AG04449 (cell line): ENCODE measurements at regions of chr3 and their contacts with region 1.

Region 1: GRCh38 chr3:186783073-186783730 is at the start of gene EIF4A2:
- DNase-seq: peak; percentile 52
- H3K4me3 ChIP-seq: peak within 1 kb of the TSS; percentile 98
- CTCF ChIP-seq: no peak

Region 2: GRCh38 chr3:186570096-186570940 is 212.9 kb before region 1 on chr3 and contains the start of gene DNAJB11:
- CTCF ChIA-PET with region 1: no interaction called
- POLR2A ChIA-PET with region 1: interaction called, 11 read pairs
- DNase-seq: peak; percentile 99
- H3K4me3 ChIP-seq: peak within 1 kb of the TSS; percentile 93
- CTCF ChIP-seq: no peak

Region 3: GRCh38 chr3:186772701-186773424 is 10.3 kb before region 1 on chr3:
- CTCF ChIA-PET with region 1: interaction called, 6 read pairs
- POLR2A ChIA-PET with region 1: interaction called, 73 read pairs
- DNase-seq: no peak
- H3K4me3 ChIP-seq: peak overlapping the region; percentile 44
- CTCF ChIP-seq: no peak

Region 4: DNA sequence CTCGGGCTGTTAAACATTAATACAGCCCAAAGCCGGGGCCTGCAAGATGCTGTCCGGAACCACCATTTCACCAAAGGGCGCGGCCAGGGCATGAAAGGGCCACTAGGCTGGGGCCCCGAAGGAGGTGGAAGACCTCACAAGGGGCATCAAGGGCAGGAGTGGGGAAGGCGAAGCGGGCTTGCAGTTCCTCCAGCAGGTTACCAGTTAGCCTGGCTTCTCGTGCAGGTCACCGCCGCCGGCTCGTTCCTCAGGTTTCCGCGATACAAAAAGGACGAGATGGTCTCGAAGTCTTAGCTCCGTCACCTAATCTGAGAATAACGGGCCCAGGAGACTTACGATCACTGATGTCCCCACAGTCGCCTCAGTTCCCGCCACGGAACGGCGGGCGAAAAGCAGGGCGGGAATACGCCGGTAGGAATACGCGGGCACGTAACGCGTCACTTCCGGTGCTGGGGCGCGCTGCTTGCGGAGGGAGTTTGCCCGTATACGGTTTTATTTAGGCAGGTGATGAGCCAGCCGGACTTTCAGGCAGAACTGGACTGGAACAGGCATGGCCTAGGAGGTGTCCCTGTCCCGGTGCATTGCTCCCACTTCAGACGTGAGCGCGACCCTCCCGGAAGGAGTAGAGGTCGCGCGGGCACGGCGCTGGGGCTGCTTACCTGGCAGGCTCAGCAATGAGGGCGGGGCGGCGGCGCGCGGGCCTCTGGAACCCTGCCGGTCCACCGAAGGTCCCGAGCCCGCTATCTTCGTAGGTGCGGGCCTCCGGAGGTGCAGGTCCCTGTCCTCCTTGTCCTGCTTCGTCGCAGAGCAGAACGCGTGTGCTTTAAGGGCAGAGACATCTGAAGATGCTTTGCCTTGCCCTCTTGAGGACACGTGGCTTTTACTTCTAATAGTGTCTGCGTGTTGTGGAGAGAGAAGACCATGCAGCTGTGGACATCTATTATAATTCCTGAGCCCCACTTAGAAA is 23.2 kb after region 1 on chr3 and contains the start of gene RFC4:
- CTCF ChIA-PET with region 1: no interaction called
- POLR2A ChIA-PET with region 1: interaction called, 13 read pairs
- DNase-seq: no peak
- H3K4me3 ChIP-seq: peak within 1 kb of the TSS; percentile 89
- CTCF ChIP-seq: no peak

Region 5: DNA sequence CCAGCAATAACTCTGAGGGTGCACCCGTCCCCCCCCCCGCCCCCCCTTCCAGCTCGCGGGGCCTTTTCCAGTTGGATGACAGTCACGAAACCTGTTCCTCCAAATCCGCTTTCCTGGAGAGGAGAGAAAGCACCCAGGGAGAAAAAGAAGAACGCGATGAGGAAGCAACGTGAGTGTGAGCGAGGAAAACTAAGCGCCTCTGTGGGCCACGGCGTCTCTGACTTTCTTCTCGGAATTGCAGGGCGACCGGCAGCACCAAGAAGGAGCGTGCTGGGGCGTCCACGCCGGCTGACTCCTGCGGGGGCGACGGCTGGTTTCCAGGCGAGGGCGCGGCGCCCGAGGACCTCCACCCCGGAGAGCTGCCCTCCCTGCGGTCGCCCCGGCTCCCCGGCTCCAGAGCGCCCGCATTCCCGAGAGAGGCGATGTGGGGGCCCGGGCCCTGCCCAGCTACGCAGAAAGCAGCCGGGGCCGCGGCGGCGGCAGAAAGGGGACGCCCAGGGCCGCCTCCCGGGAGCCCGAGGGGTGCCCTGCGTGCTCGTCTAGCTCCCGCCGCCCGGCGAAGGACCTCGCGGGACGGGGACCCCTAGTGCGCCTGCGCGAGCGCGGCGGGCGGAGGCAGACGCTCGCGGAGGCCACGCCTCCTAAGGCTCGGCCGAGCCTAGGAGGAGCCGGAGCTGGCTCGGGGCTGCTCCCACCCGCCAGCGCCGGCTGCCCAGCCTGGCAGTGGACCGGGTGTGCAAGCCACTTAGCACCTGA is 44.0 kb after region 1 on chr3:
- CTCF ChIA-PET with region 1: interaction called, 6 read pairs
- POLR2A ChIA-PET with region 1: interaction called, 20 read pairs
- DNase-seq: no peak
- H3K4me3 ChIP-seq: peak overlapping the region; percentile 64
- CTCF ChIP-seq: no peak

Region 6: DNA sequence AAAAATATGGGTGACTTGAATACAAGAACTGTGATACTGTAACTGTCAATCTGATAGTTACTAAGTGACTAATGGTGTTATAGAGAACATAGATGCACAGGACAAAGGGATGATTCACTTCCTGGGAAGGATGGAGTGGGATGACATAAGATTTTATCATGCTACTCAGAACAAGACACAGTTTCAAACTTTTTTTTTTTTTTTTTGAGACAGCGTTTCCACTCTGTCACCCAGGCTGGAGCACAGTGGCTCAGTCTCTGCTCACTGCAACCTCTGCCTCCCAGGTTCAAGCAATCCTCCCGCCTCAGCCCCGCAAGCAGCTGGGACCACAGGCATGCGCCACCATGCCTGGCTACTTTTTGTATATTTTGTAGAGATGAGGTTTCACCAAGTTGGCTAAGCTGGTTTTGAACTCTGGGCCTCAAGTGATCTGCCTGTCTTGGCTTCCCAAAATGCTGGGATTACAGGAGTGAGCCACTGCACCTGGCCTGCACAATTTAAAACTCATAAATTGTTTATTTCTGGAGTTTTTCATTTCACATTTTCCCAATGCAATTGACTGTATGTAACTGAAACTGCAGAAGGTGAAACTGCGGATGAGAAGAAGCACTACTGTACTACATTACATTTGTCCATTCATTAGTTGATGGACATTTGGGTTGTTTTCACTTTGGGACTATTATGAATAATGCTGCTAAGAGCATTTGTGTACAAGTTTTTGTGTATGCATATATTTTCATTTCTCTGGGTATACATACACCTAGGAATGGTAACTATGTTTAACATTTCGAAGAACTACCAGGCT is 99.9 kb after region 1 on chr3:
- CTCF ChIA-PET with region 1: no interaction called
- POLR2A ChIA-PET with region 1: no interaction called
- DNase-seq: peak; percentile 33
- H3K4me3 ChIP-seq: no peak overlapping the region
- CTCF ChIP-seq: no peak